Gastrocnemius medialis (tissue), 4 donors: ENCODE measurements at regions of chr2 and their contacts with region 1.

Region 1: GRCh38 chr2:27010139-27010538 is 22.6 kb upstream of the TMEM214 start:
- DNase-seq: no peak
- ATAC-seq: no peak
- H3K4me3 ChIP-seq: no peak overlapping the region
- H3K27ac ChIP-seq: peak overlapping the region in 3 of 4 donors; percentile 44 to 81 (median 69)
- H3K4me1 ChIP-seq: peaks cover 55 to 84% of the 10 kb centered on the region in 2 donors
- H3K27me3 ChIP-seq: no peaks in the 10 kb centered on the region
- CTCF ChIP-seq: no peak
- POLR2A ChIP-seq: no peak

Region 2: DNA sequence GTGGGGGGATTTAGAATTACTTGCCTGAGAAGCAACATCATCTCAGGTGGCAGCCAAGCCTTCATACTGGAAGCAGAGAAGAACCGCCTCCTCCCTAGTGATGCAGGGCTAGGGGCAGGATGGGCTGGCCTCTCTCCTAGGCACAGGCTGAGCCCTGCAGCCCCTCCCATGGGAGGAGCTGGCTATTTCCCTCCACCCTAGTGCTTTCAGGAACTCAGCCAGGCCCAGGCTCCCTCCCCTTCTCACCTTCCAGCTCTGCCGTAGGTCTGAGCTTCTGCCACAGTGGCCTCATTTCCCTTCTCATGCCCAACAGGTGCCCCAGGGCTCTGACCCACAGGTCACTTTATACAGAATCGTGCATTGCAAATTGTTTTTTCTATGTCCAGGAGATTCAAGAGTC is 193.2 kb before region 1 on chr2:
- in situ Hi-C with region 1: no loop called
- intact Hi-C with region 1: no loop called
- DNase-seq: no peak
- ATAC-seq: no peak
- H3K4me3 ChIP-seq: no peak overlapping the region
- H3K27ac ChIP-seq: no peak overlapping the region
- H3K4me1 ChIP-seq: no peaks in the 10 kb centered on the region
- H3K27me3 ChIP-seq: peaks cover 0 to 6% (median 0%) of the 10 kb centered on the region in 3 donors
- CTCF ChIP-seq: no peak
- POLR2A ChIP-seq: no peak

Region 3: GRCh38 chr2:26978061-26978596 is 32.0 kb before region 1 on chr2:
- in situ Hi-C with region 1: no loop called
- intact Hi-C with region 1: loop called (anchors 2 kb)
- DNase-seq: peak; percentile 77
- ATAC-seq: peak; percentile 65 to 73
- H3K4me3 ChIP-seq: no peak overlapping the region
- H3K27ac ChIP-seq: peak overlapping the region; percentile 94 to 97 (median 96)
- H3K4me1 ChIP-seq: peaks cover 90 to 96% of the 10 kb centered on the region in 2 donors
- H3K27me3 ChIP-seq: no peaks in the 10 kb centered on the region
- CTCF ChIP-seq: no peak
- POLR2A ChIP-seq: no peak

Region 4: GRCh38 chr2:27078267-27079194 is 68.4 kb after region 1 on chr2 and contains the start of gene EMILIN1:
- in situ Hi-C with region 1: no loop called
- intact Hi-C with region 1: no loop called
- DNase-seq: peak; percentile 54 to 77
- ATAC-seq: peak; percentile 22 to 32
- H3K4me3 ChIP-seq: peak within 1 kb of the TSS; percentile 44 to 51 (median 49)
- H3K27ac ChIP-seq: peak within 1 kb of the TSS; percentile 75 to 95 (median 86)
- H3K4me1 ChIP-seq: peaks cover 15 to 28% of the 10 kb centered on the region in 2 donors
- H3K27me3 ChIP-seq: no peaks in the 10 kb centered on the region
- CTCF ChIP-seq: no peak
- POLR2A ChIP-seq: peak in 1 of 2 donors; percentile 32
- total RNA-seq, gene EMILIN1: 6.8 to 18.2 (median 11.3) TPM